H1 (cell line): ENCODE measurements at regions of chrX and their contacts with region 1.

Region 1: DNA sequence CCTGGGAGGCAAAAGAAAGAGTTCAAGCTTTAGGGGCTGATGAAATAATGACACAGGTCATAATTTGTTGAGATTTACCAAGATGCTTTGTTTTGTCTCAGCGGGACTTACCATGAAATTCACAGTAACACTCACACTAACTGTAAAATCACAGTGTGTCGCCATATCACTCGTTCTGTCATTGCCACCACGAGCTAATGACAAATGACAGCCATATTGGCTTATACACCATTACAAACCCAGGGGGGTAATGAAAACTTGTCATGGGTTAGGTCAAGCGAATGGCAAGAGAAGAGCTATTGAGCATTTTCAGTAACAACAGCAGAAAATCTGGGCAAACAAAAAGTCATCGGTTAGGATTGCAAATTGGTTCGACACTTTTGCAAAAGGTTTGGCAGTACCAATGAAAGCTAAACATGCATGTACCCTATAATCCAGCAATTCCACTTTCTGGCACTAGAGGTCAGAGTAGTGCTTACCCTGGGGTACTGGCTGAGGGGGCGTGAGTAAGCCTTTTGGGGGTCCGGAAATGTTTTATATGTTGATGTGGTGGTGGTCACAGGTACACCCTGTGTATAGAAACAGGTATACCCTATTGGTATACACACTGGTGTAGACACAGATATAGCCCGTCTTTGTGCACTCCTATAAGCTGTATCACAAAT is 83.9 kb upstream of the RAI2 start:
- DNase-seq: peak in 1 of 2 experiments; percentile 45
- H3K4me3 ChIP-seq: no peak overlapping the region
- H3K27ac ChIP-seq: no peak overlapping the region
- H3K4me1 ChIP-seq: 0 out of 7 replicates have a peak, but pooled peaks cover 0 to 3% (median 0%) of the 10 kb centered on the region in 4 experiments
- H3K27me3 ChIP-seq: no peaks in the 10 kb centered on the region
- CTCF ChIP-seq: peak; percentile 11 to 59 (median 49)
- EP300 ChIP-seq: no peak
- POLR2A ChIP-seq: no peak
- RAD21 ChIP-seq: peak; percentile 63 to 69

Region 2: DNA sequence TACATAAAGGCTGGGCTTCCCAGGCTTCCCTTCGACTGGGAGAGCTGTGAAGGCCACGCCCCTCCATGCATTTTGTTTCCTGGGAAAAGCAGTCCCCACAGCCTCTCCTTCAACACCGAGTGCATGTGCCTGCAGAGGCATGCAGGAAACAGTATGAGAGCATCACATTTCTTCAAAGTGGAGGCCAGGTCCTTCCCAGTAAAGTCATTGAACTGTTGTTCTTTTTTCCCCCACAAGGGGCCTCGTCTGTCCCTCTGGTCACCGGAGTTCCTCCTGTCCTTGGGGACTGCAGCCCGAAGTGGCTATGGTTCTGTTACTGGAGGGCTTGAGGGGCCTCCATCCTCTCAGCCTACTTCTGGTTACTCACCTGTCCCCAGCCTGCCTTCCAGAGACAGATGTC is 139.8 kb before region 1 on chrX:
- CTCF ChIA-PET with region 1: no interaction called
- POLR2A ChIA-PET with region 1: no interaction called
- DNase-seq: peak in 1 of 2 experiments; percentile 37
- H3K4me3 ChIP-seq: no peak overlapping the region
- H3K27ac ChIP-seq: no peak overlapping the region
- H3K4me1 ChIP-seq: no peaks in the 10 kb centered on the region
- H3K27me3 ChIP-seq: no peaks in the 10 kb centered on the region
- CTCF ChIP-seq: peak; percentile 9 to 44 (median 20); a peak in 3 of 4 replicates
- EP300 ChIP-seq: no peak
- POLR2A ChIP-seq: no peak
- RAD21 ChIP-seq: peak; percentile 4 to 26; a peak in 1 of 4 replicates

Region 3: GRCh38 chrX:17930850-17931249 is 14.1 kb before region 1 on chrX:
- CTCF ChIA-PET with region 1: interaction called, 35 read pairs
- POLR2A ChIA-PET with region 1: no interaction called
- DNase-seq: no peak
- H3K4me3 ChIP-seq: no peak overlapping the region
- H3K27ac ChIP-seq: no peak overlapping the region
- H3K4me1 ChIP-seq: peaks cover 0 to 5% (median 0%) of the 10 kb centered on the region in 4 experiments; a peak in 3 of 7 replicates
- H3K27me3 ChIP-seq: no peaks in the 10 kb centered on the region
- CTCF ChIP-seq: no peak
- EP300 ChIP-seq: no peak
- POLR2A ChIP-seq: no peak
- RAD21 ChIP-seq: peak; percentile 19 to 29

Region 4: GRCh38 chrX:18126971-18127370 is 182.0 kb after region 1 on chrX:
- CTCF ChIA-PET with region 1: no interaction called
- POLR2A ChIA-PET with region 1: no interaction called
- DNase-seq: no peak
- H3K4me3 ChIP-seq: no peak overlapping the region
- H3K27ac ChIP-seq: no peak overlapping the region
- H3K4me1 ChIP-seq: no peaks in the 10 kb centered on the region
- H3K27me3 ChIP-seq: no peaks in the 10 kb centered on the region
- CTCF ChIP-seq: no peak
- EP300 ChIP-seq: no peak
- POLR2A ChIP-seq: no peak
- RAD21 ChIP-seq: no peak

Region 5: DNA sequence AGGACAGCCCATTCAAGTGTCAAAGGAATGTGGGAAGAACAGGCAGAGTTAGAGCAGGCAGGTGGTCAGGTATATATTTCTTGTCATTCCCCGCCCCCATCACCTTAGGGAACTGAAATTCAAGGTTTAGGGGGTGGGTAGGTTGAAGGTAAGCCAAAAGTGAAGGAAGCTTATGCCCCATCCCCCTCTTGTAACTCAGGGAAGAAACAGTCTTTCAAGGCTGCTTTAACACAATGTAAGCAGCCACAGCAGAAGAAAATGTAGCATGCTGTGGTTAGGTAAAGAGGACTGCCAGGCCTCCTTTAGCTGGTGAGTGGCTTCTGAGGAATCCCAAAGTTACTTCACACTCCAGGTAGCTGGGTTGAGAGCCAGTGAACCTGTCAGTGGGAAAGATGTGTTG is 604.7 kb after region 1 on chrX:
- CTCF ChIA-PET with region 1: no interaction called
- POLR2A ChIA-PET with region 1: no interaction called
- DNase-seq: no peak
- H3K4me3 ChIP-seq: no peak overlapping the region
- H3K27ac ChIP-seq: no peak overlapping the region
- H3K4me1 ChIP-seq: peaks cover 0 to 5% (median 4%) of the 10 kb centered on the region in 4 experiments; a peak in 5 of 7 replicates
- H3K27me3 ChIP-seq: no peaks in the 10 kb centered on the region
- CTCF ChIP-seq: no peak
- EP300 ChIP-seq: no peak
- POLR2A ChIP-seq: no peak
- RAD21 ChIP-seq: no peak